ENCODE measurements at regions of chr1 and their contacts with region 1.

Region 1: GRCh38 chr1:211323156-211324063 is 3.2 kb upstream of the TRAF5 start:
- DNase-seq: peak; percentile 81
- ATAC-seq: peak; percentile 83
- H3K4me3 Mint-ChIP-seq: no peak overlapping the region
- H3K27ac Mint-ChIP-seq: peak overlapping the region; percentile 42
- H3K4me1 Mint-ChIP-seq: peaks cover 69% of the 10 kb centered on the region
- H3K27me3 Mint-ChIP-seq: no peaks in the 10 kb centered on the region

Region 2: GRCh38 chr1:210915890-210916507 is 407.4 kb before region 1 on chr1:
- CTCF ChIA-PET with region 1: no interaction called
- POLR2A ChIA-PET with region 1: no interaction called
- intact Hi-C with region 1: no loop called
- DNase-seq: no peak
- ATAC-seq: no peak
- H3K4me3 Mint-ChIP-seq: no peak overlapping the region
- H3K27ac Mint-ChIP-seq: no peak overlapping the region
- H3K4me1 Mint-ChIP-seq: no peaks in the 10 kb centered on the region
- H3K27me3 Mint-ChIP-seq: peaks cover 3% of the 10 kb centered on the region

Region 3: GRCh38 chr1:211258756-211259637 is 64.4 kb before region 1 on chr1 and contains the start of gene RCOR3:
- CTCF ChIA-PET with region 1: interaction called, 3 read pairs
- POLR2A ChIA-PET with region 1: no interaction called
- intact Hi-C with region 1: loop called (anchors 1 to 5 kb)
- DNase-seq: peak; percentile 97
- ATAC-seq: peak; percentile 83
- H3K4me3 Mint-ChIP-seq: peak within 1 kb of the TSS; percentile 90
- H3K27ac Mint-ChIP-seq: peak within 1 kb of the TSS; percentile 96
- H3K4me1 Mint-ChIP-seq: peaks cover 13% of the 10 kb centered on the region
- H3K27me3 Mint-ChIP-seq: no peaks in the 10 kb centered on the region
- total RNA-seq, gene RCOR3: 31.0 to 33.4 TPM

Region 4: DNA sequence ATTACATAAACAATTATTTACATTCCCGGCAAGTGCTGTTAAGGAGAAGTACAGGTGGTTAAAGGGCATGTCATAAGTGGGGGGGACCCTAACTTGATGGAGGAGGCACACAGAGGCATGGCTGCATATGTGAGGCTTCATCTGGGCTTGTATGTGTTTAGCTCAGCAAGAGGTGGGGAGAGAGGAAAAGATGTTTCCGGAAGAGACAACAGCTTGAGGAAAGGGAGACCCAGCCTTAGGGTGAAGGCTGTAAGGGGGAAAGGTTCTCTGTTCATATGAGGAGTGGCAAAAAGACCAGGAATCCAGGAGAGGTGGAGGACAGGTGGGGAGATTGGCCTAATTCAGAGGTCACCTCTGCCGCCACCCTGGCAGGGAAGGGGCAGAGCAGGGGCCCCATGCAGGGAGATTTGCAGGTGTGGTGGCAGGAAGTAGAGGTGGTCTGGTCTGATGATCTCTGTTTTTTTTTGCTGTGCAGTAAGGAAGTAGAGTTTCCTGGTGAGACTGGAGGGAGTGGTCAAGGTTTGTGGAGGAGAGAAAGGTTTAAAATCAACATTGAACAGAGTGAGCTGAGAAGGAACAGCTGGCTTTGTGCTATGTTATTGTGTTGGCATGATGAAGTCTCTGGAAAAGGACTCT is 12.2 kb after region 1 on chr1:
- CTCF ChIA-PET with region 1: interaction called, 30 read pairs
- POLR2A ChIA-PET with region 1: interaction called, 3 read pairs
- intact Hi-C with region 1: no loop called
- DNase-seq: no peak
- ATAC-seq: peak; percentile 28
- H3K4me3 Mint-ChIP-seq: peak overlapping the region; percentile 45
- H3K27ac Mint-ChIP-seq: peak overlapping the region; percentile 90
- H3K4me1 Mint-ChIP-seq: peaks cover 89% of the 10 kb centered on the region
- H3K27me3 Mint-ChIP-seq: no peaks in the 10 kb centered on the region

Region 5: GRCh38 chr1:211382714-211383480 is 59.5 kb after region 1 on chr1:
- CTCF ChIA-PET with region 1: interaction called, 14 read pairs
- POLR2A ChIA-PET with region 1: no interaction called
- intact Hi-C with region 1: loop called (anchors 1 kb)
- DNase-seq: peak; percentile 86
- ATAC-seq: peak; percentile 72
- H3K4me3 Mint-ChIP-seq: peak overlapping the region; percentile 88
- H3K27ac Mint-ChIP-seq: peak overlapping the region; percentile 98
- H3K4me1 Mint-ChIP-seq: peaks cover 47% of the 10 kb centered on the region
- H3K27me3 Mint-ChIP-seq: no peaks in the 10 kb centered on the region

Region 6: DNA sequence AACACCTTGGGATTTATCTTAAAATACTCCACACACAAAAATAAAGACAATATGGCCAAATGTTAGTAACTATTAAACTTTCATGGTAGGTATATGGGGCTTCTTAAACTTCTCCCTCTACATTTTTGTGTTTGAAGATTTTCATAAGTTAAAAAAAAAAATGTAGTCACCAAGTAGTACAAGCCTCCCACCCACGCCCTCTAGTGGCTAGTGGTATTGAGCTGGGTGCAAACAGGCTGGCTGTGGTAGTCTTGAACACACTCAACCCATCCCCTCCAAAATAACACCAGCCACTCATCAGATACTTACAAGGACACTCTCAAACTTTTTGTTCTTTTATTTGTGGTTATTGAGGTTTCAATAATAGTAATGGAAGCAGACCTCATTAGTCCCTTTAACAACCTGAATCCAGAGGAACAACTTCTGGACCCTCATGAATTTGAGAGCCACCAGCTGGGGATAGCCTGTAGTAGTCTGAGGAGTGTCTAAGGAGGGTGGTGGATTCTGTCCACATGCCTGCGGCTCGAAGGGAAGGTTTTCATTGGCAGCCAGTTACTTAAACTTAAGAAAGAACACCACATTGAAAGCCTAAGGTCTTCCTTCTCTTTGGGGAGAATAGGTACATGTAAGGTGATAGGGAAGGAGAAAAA is 152.9 kb after region 1 on chr1:
- CTCF ChIA-PET with region 1: interaction called, 14 read pairs
- POLR2A ChIA-PET with region 1: interaction called, 3 read pairs
- intact Hi-C with region 1: loop called (anchors 1 kb)
- DNase-seq: peak; percentile 89
- ATAC-seq: peak; percentile 81
- H3K4me3 Mint-ChIP-seq: no peak overlapping the region
- H3K27ac Mint-ChIP-seq: no peak overlapping the region
- H3K4me1 Mint-ChIP-seq: no peaks in the 10 kb centered on the region
- H3K27me3 Mint-ChIP-seq: peaks cover 14% of the 10 kb centered on the region

Region 7: DNA sequence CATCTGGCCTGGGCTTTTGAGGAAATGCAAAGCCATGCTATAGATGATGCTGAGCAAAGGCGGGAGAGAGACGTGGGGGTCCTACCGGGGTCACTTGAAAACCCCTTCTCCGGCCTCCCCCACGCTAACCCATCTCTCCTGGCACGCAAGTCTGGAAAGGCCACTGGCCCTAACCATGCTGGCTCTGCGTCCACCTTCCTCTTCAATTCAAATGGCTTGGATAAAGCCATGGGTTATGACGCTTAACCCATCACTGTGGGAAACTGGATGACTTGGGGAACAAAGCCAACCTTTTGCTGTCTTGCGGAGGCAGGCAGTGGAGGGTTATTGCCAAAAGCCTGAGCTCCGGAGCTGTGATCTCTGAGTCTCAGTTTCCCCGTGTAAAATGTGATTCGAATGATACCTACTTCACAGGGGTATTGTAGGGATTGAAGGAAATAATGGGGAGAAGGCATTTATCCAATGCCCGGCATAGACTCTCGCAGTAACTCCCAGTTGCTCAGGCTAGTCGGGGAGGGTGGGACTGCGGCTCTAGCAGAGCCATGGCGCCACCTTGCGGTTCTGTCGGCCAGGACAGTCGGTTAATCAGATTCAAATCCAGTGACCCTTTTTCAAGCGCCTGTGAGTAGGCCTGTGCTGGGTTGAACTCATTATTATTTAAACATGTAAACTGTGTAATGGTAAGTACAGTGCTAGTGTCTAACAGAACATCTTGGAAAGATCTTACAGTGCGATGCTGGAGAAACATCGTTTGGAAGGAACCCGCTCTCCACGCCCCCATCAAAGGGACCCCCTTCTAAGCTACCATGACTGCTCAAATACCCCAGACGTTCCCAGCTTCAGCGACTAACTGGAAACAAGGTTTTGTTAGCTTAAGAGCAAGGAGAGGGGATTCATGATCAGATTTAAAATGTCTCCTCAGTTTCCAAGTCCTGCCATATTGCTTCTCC is 331.7 kb after region 1 on chr1:
- CTCF ChIA-PET with region 1: interaction called, 5 read pairs
- POLR2A ChIA-PET with region 1: no interaction called
- intact Hi-C with region 1: loop called (anchors 1 to 10 kb)
- DNase-seq: peak; percentile 91
- ATAC-seq: peak; percentile 100
- H3K4me3 Mint-ChIP-seq: no peak overlapping the region
- H3K27ac Mint-ChIP-seq: no peak overlapping the region
- H3K4me1 Mint-ChIP-seq: no peaks in the 10 kb centered on the region
- H3K27me3 Mint-ChIP-seq: peaks cover 1% of the 10 kb centered on the region